HepG2 (cell line): ENCODE measurements at regions of chr5 and their contacts with region 1.

Region 1: GRCh38 chr5:135829681-135830383 is 4.6 kb upstream of the SLC25A48 start:
- DNase-seq: peak; percentile 20
- ATAC-seq: peak; percentile 43
- H3K4me3 ChIP-seq: no peak overlapping the region; a peak in 1 of 6 replicates
- H3K27ac ChIP-seq: no peak overlapping the region
- H3K4me1 ChIP-seq: peaks cover 3% of the 10 kb centered on the region; the same call in 1 of the 2 replicates
- H3K27me3 ChIP-seq: peaks cover 1 to 80% of the 10 kb centered on the region in 2 experiments; a peak in 4 of 5 replicates
- CTCF ChIP-seq: peak; percentile 78
- EP300 ChIP-seq: no peak
- POLR2A ChIP-seq: no peak
- RAD21 ChIP-seq: peak; percentile 46; the same call in 1 of the 2 replicates

Region 2: DNA sequence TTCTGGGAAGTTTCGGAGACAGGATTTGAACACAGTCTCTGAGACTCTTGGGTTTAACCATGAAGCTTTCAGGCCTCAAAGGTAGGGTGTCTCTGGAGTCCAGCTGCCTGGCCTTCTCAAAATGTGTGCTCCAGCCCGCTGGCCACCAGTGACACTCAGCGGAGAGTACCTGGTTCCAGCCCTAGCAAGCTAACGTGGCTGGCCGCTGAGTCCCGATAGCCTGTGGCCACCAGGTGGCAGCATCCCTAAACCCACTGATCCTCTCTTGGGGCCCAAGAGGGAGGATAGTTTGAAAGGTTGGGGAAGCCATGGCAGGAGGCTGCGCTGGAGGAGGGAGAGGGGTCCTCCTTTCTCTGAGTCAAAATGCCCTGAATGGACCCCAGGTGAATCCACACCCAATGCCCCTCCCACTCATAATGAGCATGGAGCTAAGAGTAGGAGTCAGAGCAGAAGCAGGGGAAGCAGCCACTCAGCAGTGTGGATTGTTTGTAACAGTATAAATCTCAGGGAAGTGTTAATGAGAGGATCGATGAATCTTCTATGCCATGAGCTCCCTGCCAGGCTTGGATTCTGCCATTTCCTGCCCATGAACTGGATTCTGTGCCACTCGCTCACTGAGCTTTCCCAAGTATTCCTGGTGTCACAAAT is 372.3 kb before region 1 on chr5:
- CTCF ChIA-PET with region 1: no interaction called
- POLR2A ChIA-PET with region 1: no interaction called
- in situ Hi-C with region 1: loop called (anchors 5 kb)
- intact Hi-C with region 1: no loop called
- DNase-seq: peak; percentile 56
- ATAC-seq: peak; percentile 88
- H3K4me3 ChIP-seq: no peak overlapping the region
- H3K27ac ChIP-seq: no peak overlapping the region
- H3K4me1 ChIP-seq: no peaks in the 10 kb centered on the region
- H3K27me3 ChIP-seq: peaks cover 2 to 8% of the 10 kb centered on the region in 2 experiments; a peak in 2 of 5 replicates
- CTCF ChIP-seq: peak; percentile 90
- EP300 ChIP-seq: no peak
- POLR2A ChIP-seq: no peak
- RAD21 ChIP-seq: peak; percentile 63; the same call in 1 of the 2 replicates

Region 3: GRCh38 chr5:135560858-135561257 is 269.0 kb before region 1 on chr5:
- CTCF ChIA-PET with region 1: interaction called, 5 read pairs
- POLR2A ChIA-PET with region 1: no interaction called
- in situ Hi-C with region 1: loop called (anchors 5 kb)
- intact Hi-C with region 1: loop called (anchors 2 kb)
- DNase-seq: peak; percentile 63
- ATAC-seq: peak; percentile 98
- H3K4me3 ChIP-seq: no peak overlapping the region
- H3K27ac ChIP-seq: no peak overlapping the region
- H3K4me1 ChIP-seq: no peaks in the 10 kb centered on the region
- H3K27me3 ChIP-seq: 0 out of 5 replicates have a peak, but pooled peaks cover 0 to 1% of the 10 kb centered on the region in 2 experiments
- CTCF ChIP-seq: peak; percentile 94
- EP300 ChIP-seq: no peak
- POLR2A ChIP-seq: no peak
- RAD21 ChIP-seq: peak; percentile 65

Region 4: GRCh38 chr5:135651150-135651549 is 178.7 kb before region 1 on chr5:
- CTCF ChIA-PET with region 1: no interaction called
- POLR2A ChIA-PET with region 1: no interaction called
- in situ Hi-C with region 1: no loop called
- intact Hi-C with region 1: no loop called
- DNase-seq: no peak
- ATAC-seq: no peak
- H3K4me3 ChIP-seq: no peak overlapping the region
- H3K27ac ChIP-seq: no peak overlapping the region
- H3K4me1 ChIP-seq: no peaks in the 10 kb centered on the region
- H3K27me3 ChIP-seq: 0 out of 5 replicates have a peak, but pooled peaks cover 0 to 1% of the 10 kb centered on the region in 2 experiments
- CTCF ChIP-seq: no peak
- EP300 ChIP-seq: no peak
- POLR2A ChIP-seq: no peak
- RAD21 ChIP-seq: no peak

Region 5: DNA sequence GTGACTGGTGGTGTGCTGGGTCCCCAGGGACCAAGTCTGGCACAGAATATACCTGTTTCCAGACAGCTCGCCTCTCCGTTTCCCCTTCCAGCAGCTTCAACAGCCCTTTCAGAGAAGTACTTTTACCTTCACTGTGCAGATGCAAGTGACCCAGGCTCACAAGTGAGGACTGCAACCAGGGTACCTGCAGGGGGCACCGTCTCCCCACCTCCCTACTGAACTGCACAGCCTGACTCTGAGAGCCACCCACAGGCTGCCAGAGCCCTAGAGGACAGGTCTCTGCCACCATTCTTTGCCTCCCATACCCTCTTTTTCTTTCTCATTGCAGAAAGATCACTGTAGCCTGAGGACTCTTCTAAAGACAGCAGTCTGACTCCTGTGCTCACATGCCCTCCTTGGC is 50.4 kb after region 1 on chr5:
- CTCF ChIA-PET with region 1: no interaction called
- POLR2A ChIA-PET with region 1: no interaction called
- in situ Hi-C with region 1: no loop called
- intact Hi-C with region 1: loop called (anchors 5 kb)
- DNase-seq: peak; percentile 48
- ATAC-seq: peak; percentile 93
- H3K4me3 ChIP-seq: no peak overlapping the region
- H3K27ac ChIP-seq: no peak overlapping the region
- H3K4me1 ChIP-seq: peaks cover 14% of the 10 kb centered on the region
- H3K27me3 ChIP-seq: 0 out of 5 replicates have a peak, but pooled peaks cover 0 to 2% of the 10 kb centered on the region in 2 experiments
- CTCF ChIP-seq: peak; percentile 64
- EP300 ChIP-seq: no peak
- POLR2A ChIP-seq: no peak
- RAD21 ChIP-seq: peak; percentile 46; the same call in 1 of the 2 replicates